Tibial artery (tissue), 4 donors: ENCODE measurements at regions of chr1 and their contacts with region 1.

Region 1: GRCh38 chr1:48109390-48110013 is 112.3 kb upstream of the TRABD2B start:
- DNase-seq: no peak
- H3K4me3 ChIP-seq: no peak overlapping the region
- H3K27ac ChIP-seq: no peak overlapping the region
- H3K4me1 ChIP-seq: no peaks in the 10 kb centered on the region
- H3K27me3 ChIP-seq: no peaks in the 10 kb centered on the region
- CTCF ChIP-seq: peak; percentile 84 to 94

Region 2: DNA sequence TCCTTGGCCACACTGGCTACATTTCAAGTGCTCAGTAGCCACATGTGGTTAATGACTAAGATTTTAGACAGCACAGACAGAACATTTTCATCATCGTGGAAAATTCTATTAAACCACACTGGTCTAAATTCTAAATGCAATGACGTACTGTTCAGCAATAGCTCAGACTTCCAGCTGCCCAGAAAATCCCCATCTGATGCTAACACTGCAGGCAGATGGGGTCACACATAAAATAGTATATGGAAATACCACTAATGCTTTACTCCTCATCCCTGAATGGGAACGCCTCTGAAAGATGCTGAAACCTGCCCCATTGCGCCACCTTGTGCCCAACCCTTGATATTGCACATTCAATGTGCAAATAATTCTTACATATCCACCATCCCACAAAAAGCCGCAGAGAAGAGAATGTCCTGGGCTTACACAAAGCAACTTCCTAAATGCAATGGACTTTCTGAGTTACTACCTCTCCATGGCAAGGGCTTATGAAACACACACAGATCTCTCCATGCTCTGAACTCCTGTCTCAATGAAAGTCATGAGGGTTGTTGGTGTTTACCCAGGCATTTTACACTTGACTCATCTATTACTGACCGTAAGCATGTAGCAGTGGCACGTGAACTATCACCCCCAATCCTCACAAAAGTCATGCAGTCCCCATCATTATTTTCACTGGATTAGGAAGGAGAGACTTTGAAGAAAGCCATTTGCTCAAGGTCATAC is 92.7 kb after region 1 on chr1:
- intact Hi-C with region 1: loop called (anchors 2 kb)
- DNase-seq: peak; percentile 69 to 80
- H3K4me3 ChIP-seq: no peak overlapping the region
- H3K27ac ChIP-seq: peak overlapping the region in 1 of 2 donors; percentile 3
- H3K4me1 ChIP-seq: peaks cover 0 to 12% (median 8%) of the 10 kb centered on the region in 4 donors
- H3K27me3 ChIP-seq: no peaks in the 10 kb centered on the region
- CTCF ChIP-seq: peak; percentile 78 to 80

Region 3: GRCh38 chr1:48329486-48329885 is 220.0 kb after region 1 on chr1:
- intact Hi-C with region 1: no loop called
- DNase-seq: peak in 1 of 2 donors; percentile 31
- H3K4me3 ChIP-seq: no peak overlapping the region
- H3K27ac ChIP-seq: no peak overlapping the region
- H3K4me1 ChIP-seq: no peaks in the 10 kb centered on the region
- H3K27me3 ChIP-seq: no peaks in the 10 kb centered on the region
- CTCF ChIP-seq: no peak

Region 4: DNA sequence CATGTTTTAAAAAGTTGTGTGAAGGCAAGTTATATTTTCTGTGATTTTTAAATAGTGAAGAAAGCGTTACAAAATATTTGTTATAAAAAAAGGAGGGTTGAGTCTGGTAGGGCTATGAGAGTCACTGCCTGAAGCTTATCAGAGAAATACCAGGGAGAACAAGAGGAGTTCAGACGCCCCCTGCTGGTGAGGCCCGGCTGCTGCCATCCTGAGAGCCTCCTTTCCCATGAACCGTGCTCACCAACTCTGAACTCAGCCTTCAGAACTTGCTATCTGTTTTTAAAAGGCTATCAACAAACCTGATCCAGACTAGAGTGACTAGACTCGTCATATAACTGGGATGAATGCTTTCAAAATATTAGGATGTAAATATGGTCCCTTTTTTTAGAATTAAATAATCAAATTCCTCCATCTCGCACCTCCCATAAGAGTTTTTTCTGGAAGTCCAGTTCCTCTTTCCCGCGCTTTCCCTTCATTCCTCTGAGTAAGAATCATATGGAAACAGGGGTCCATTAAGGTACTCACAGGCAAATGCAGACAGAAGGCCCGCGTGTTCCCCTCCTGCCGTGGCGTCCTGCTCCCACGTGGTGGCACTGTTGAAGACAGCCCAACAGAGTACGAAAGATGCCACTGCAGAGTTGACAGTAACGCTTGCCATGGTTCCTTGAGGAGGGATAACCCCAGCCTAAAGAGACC is 388.7 kb after region 1 on chr1:
- intact Hi-C with region 1: loop called (anchors 2 kb)
- DNase-seq: peak; percentile 80 to 88
- H3K4me3 ChIP-seq: no peak overlapping the region
- H3K27ac ChIP-seq: no peak overlapping the region
- H3K4me1 ChIP-seq: peaks cover 0 to 17% (median 8%) of the 10 kb centered on the region in 4 donors
- H3K27me3 ChIP-seq: no peaks in the 10 kb centered on the region
- CTCF ChIP-seq: peak; percentile 85 to 90

Region 5: GRCh38 chr1:48697066-48697707 is 587.7 kb after region 1 on chr1:
- intact Hi-C with region 1: loop called (anchors 5 kb)
- DNase-seq: peak; percentile 54 to 74
- H3K4me3 ChIP-seq: no peak overlapping the region
- H3K27ac ChIP-seq: no peak overlapping the region
- H3K4me1 ChIP-seq: no peaks in the 10 kb centered on the region
- H3K27me3 ChIP-seq: peaks cover 0 to 7% of the 10 kb centered on the region in 2 donors
- CTCF ChIP-seq: peak; percentile 78 to 92